ENCODE measurements at regions of chr17 and their contacts with region 1.

Region 1: DNA sequence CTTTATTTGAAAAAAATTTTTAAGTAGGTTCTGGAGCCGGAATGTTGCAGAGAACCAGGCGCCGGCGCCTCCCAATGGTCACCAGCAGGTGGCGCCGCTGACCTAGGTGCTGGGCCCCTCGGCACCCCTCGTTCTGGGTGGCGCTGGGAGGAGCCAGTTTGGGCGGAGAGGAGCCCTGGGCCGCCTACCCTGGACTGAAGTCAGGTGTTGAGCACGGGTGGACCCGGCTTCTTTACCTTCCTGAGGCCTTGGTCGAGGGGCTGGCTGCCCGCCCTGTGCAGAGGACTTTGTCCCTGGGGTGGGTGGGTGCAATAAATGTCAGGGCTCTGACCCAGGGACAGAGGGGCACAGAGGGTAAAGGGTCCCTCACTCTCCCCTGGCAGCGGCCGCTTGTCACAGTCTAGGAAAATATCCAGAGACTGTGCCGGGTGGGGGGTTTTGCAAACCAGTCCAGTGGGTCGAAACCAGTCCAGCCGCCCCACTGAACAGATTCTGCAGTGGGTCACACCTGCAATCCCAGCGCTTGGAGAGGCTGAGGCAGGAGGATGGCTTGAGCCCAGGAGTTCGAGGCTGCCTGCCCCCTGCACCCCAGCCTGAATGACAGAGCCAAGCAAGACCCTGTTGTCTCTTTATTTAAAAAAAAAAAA is 30.1 kb upstream of the TNFRSF13B start:
- DNase-seq: peak; percentile 48
- ATAC-seq: peak; percentile 88
- H3K4me3 ChIP-seq: peak overlapping the region in 1 of 3 experiments; percentile 55; a peak in 1 of 6 replicates
- H3K27ac ChIP-seq: no peak overlapping the region
- H3K4me1 ChIP-seq: peaks cover 19% of the 10 kb centered on the region
- H3K27me3 ChIP-seq: peaks cover 0 to 22% of the 10 kb centered on the region in 2 experiments; a peak in 4 of 5 replicates
- CTCF ChIP-seq: peak; percentile 91
- EP300 ChIP-seq: no peak
- POLR2A ChIP-seq: no peak
- RAD21 ChIP-seq: peak; percentile 93

Region 2: GRCh38 chr17:17141860-17142552 is 140.0 kb after region 1 on chr17:
- CTCF ChIA-PET with region 1: interaction called, 27 read pairs
- POLR2A ChIA-PET with region 1: no interaction called
- in situ Hi-C with region 1: loop called (anchors 5 kb)
- intact Hi-C with region 1: loop called (anchors 2 kb)
- DNase-seq: no peak
- ATAC-seq: peak; percentile 27; the same call in 1 of the 3 replicates
- H3K4me3 ChIP-seq: no peak overlapping the region
- H3K27ac ChIP-seq: no peak overlapping the region
- H3K4me1 ChIP-seq: no peaks in the 10 kb centered on the region
- H3K27me3 ChIP-seq: no peaks in the 10 kb centered on the region
- CTCF ChIP-seq: peak; percentile 75
- EP300 ChIP-seq: no peak
- POLR2A ChIP-seq: no peak
- RAD21 ChIP-seq: no peak